ENCODE measurements at regions of chr17 and their contacts with region 1.

Region 1: GRCh38 chr17:76501018-76501826 is at the start of gene RHBDF2:
- DNase-seq: peak; percentile 96
- H3K4me3 Mint-ChIP-seq: peak within 1 kb of the TSS; percentile 74
- H3K27ac Mint-ChIP-seq: peak within 1 kb of the TSS; percentile 93
- H3K4me1 Mint-ChIP-seq: peaks cover 55% of the 10 kb centered on the region
- H3K27me3 Mint-ChIP-seq: no peaks in the 10 kb centered on the region
- total RNA-seq, gene RHBDF2: 33.2 to 33.8 TPM

Region 2: DNA sequence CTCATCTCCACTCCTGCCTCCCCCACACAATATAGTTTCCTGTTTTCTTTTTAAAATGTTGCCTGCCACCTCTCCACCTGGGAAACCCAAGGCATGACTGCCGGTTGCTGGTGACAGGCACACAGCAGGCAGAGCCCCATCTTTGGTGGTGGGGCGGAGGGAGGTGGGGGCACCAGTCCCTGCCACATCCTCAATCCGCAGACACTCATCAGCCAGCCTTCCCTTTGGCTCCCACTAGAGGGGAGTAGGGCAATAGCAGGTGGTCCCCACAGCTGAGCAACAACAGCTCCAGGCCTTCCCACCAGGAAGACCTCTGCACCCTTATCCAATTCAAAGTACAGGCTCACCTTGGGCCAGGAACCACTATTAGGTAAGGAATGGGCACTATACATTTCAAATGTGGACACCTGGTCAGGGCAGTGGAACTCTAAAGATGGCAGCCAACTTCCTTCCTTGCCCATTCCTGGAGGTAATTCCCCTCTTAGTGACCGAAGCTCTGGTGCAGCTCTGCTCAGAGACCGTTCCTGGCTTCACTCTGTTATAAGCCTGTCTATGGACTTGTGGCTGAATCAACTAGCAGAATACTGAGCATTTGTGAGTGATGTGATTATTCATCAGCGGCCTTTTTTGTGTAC is 848.2 kb before region 1 on chr17:
- CTCF ChIA-PET with region 1: no interaction called
- POLR2A ChIA-PET with region 1: no interaction called
- DNase-seq: no peak
- H3K4me3 Mint-ChIP-seq: no peak overlapping the region
- H3K27ac Mint-ChIP-seq: peak overlapping the region; percentile 42
- H3K4me1 Mint-ChIP-seq: peaks cover 2% of the 10 kb centered on the region
- H3K27me3 Mint-ChIP-seq: no peaks in the 10 kb centered on the region

Region 3: GRCh38 chr17:76467366-76467765 is 33.9 kb before region 1 on chr17 and contains the start of gene AANAT:
- CTCF ChIA-PET with region 1: interaction called, 28 read pairs
- POLR2A ChIA-PET with region 1: interaction called, 4 read pairs
- DNase-seq: no peak
- H3K4me3 Mint-ChIP-seq: no peak within 1 kb of the TSS
- H3K27ac Mint-ChIP-seq: no peak within 1 kb of the TSS
- H3K4me1 Mint-ChIP-seq: peaks cover 4% of the 10 kb centered on the region
- H3K27me3 Mint-ChIP-seq: peaks cover 5% of the 10 kb centered on the region
- total RNA-seq, gene AANAT: not detected

Region 4: DNA sequence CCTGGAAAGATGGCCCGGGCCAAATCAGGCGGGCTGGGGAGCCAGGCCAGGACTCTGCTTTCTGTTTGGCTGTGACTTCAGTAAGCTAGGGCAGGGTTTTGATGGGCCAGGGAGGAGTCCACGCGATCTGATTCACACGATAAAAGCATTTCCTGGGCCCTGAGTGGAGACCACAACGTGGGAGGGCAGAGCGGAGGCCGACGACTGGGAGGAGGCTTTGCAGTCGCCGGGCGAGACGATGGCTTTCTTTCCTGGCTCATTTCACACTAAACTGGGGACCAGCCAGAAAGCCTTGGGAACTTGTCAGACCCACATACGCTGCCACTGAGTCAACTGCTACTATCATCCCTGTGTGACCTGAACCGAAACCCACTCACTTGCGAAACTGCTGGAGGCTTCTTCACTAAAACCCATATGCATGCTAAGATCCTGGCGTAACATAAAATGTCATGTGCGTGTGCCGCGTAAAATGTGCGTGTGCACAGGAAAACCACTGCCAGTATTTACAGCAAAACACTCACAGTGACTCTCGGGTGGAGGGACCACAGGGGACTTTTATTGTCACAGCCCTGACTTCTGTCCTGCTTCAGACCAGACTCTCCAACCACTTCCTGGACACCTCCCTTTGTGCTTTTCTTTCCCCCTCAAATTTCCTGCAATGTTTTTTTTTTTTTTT is 14.2 kb after region 1 on chr17:
- CTCF ChIA-PET with region 1: interaction called, 7 read pairs
- POLR2A ChIA-PET with region 1: interaction called, 23 read pairs
- DNase-seq: peak; percentile 88
- H3K4me3 Mint-ChIP-seq: peak overlapping the region; percentile 58
- H3K27ac Mint-ChIP-seq: peak overlapping the region; percentile 99
- H3K4me1 Mint-ChIP-seq: peaks cover 60% of the 10 kb centered on the region
- H3K27me3 Mint-ChIP-seq: peaks cover under 1% of the 10 kb centered on the region